ENCODE measurements at regions of chr11 and their contacts with region 1.

Region 1: GRCh38 chr11:36131721-36132397 is 157.4 kb downstream of the COMMD9 start:
- DNase-seq: peak; percentile 51 to 79 (median 73)
- ATAC-seq: peak; percentile 90 to 93
- H3K4me3 ChIP-seq: no peak overlapping the region
- H3K27ac ChIP-seq: no peak overlapping the region
- H3K4me1 ChIP-seq: no peaks in the 10 kb centered on the region
- H3K27me3 ChIP-seq: no peaks in the 10 kb centered on the region

Region 2: DNA sequence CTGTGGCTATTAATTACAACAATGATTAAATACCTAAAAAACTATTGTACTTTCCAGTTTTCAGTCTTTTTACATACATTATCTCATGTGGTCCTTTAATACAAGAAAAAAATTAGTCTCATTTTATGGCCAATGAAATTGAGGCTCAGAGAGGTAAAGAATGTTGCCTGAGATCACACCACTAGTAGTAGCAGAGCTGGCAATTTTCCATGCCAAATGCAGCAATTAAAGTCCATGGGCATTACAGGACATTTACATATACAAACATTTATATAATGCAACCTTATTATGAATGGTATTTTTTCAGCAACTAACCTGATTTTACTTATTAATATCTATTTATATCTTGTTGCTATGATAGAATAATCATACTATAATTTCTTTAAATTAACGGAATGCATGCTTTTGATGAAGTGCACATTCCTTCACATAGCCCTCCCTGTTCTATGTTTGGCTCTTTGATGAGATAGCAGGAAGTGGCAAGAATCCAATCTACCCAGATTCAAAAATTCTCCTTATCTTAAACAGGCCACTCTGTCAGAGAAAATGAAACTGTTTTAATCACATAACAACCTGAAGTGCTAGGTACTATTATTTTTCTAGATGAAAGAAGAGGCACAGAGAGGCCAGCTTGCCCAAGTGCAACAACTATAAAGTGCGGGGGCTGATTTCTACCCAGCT is 308.9 kb before region 1 on chr11:
- intact Hi-C with region 1: loop called in 2 of 4 experiments (anchors 10 kb)
- DNase-seq: no peak
- ATAC-seq: no peak
- H3K4me3 ChIP-seq: no peak overlapping the region
- H3K27ac ChIP-seq: no peak overlapping the region
- H3K4me1 ChIP-seq: no peaks in the 10 kb centered on the region
- H3K27me3 ChIP-seq: no peaks in the 10 kb centered on the region

Region 3: DNA sequence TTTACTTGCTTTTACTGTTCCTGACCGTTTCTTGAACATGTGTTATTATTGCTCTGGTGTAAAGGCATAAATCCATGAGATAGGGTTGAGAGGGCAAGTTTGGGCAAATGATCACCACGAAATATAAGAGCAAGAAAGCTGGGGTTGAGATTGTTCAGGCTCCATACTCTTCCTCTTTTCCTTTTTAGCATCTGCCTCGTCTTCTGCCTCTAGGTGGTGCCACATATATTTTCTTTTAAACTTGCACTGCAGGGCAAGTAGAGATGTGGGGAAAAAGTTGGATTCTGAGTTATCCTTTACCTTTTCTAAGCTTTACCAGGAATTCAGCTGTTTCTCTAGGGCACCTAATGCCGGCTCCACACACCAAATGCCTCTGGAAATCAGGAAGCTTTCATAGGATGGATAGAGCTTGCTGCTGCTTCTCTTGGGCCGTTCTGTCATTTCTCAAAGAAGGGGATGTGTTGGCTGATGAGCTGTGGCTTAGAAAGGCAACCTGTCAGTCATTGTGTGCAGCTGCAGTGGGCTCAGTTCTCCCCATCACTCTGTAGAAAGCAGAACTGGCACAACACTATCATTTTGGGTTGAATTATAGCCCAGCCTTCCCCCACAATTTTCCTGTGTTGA is 89.8 kb before region 1 on chr11:
- intact Hi-C with region 1: loop called in 1 of 4 experiments (anchors 10 kb)
- DNase-seq: no peak
- ATAC-seq: peak in 1 of 2 donors; percentile 35
- H3K4me3 ChIP-seq: no peak overlapping the region
- H3K27ac ChIP-seq: no peak overlapping the region
- H3K4me1 ChIP-seq: peaks cover under 1% of the 10 kb centered on the region
- H3K27me3 ChIP-seq: no peaks in the 10 kb centered on the region

Region 4: GRCh38 chr11:36258730-36259360 is 127.0 kb after region 1 on chr11:
- intact Hi-C with region 1: loop called in 1 of 4 experiments (anchors 10 kb)
- DNase-seq: peak; percentile 48 to 72 (median 53)
- ATAC-seq: peak; percentile 58 to 80
- H3K4me3 ChIP-seq: no peak overlapping the region
- H3K27ac ChIP-seq: no peak overlapping the region
- H3K4me1 ChIP-seq: no peaks in the 10 kb centered on the region
- H3K27me3 ChIP-seq: no peaks in the 10 kb centered on the region

Measured in right cardiac atrium (tissue), 5 donors.